Endothelial cell of umbilical vein (primary cell): ENCODE measurements at regions of chr3 and their contacts with region 1.

Region 1: GRCh38 chr3:28328188-28329151 is 20.1 kb upstream of the ZCWPW2 start:
- DNase-seq: peak; percentile 48
- H3K4me3 ChIP-seq: no peak overlapping the region
- H3K27ac ChIP-seq: no peak overlapping the region
- H3K4me1 ChIP-seq: no peaks in the 10 kb centered on the region
- H3K27me3 ChIP-seq: no peaks in the 10 kb centered on the region
- CTCF ChIP-seq: peak; percentile 29 to 40
- POLR2A ChIP-seq: no peak

Region 2: GRCh38 chr3:27712136-27713077 is 616.1 kb before region 1 on chr3:
- CTCF ChIA-PET with region 1: interaction called, 193 read pairs
- POLR2A ChIA-PET with region 1: interaction called, 6 read pairs
- dilution Hi-C with region 1: no loop called
- intact Hi-C with region 1: loop called (anchors 1 kb)
- DNase-seq: peak; percentile 79
- H3K4me3 ChIP-seq: peak overlapping the region; percentile 27 to 50 (median 36)
- H3K27ac ChIP-seq: no peak overlapping the region
- H3K4me1 ChIP-seq: peaks cover 23% of the 10 kb centered on the region
- H3K27me3 ChIP-seq: peaks cover 67 to 76% of the 10 kb centered on the region in 2 experiments
- CTCF ChIP-seq: peak; percentile 68 to 90
- POLR2A ChIP-seq: no peak

Region 3: GRCh38 chr3:27877061-27878013 is 451.1 kb before region 1 on chr3:
- CTCF ChIA-PET with region 1: no interaction called
- POLR2A ChIA-PET with region 1: no interaction called
- dilution Hi-C with region 1: no loop called
- intact Hi-C with region 1: no loop called
- DNase-seq: no peak
- H3K4me3 ChIP-seq: no peak overlapping the region
- H3K27ac ChIP-seq: no peak overlapping the region
- H3K4me1 ChIP-seq: no peaks in the 10 kb centered on the region
- H3K27me3 ChIP-seq: no peaks in the 10 kb centered on the region
- CTCF ChIP-seq: no peak
- POLR2A ChIP-seq: no peak

Region 4: DNA sequence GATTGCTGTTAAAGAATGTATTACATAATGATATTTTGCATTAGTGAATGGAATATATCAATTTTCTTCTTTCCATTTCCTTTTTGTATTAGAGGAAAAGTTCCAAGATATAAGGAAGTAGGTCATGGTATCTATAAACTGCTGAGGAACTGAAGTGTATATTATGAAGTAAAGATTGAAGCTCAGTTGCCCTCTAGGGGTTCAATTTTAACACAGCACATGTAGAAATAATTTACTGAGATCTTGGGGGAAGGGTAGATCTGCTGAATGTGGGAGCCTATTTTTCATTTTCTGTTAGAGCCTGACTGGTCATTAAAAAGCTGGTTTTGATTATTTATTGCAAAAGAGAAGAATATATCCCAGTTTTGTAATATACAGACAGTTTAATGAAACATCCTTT is 41.9 kb before region 1 on chr3:
- CTCF ChIA-PET with region 1: interaction called, 15 read pairs
- POLR2A ChIA-PET with region 1: no interaction called
- dilution Hi-C with region 1: no loop called
- intact Hi-C with region 1: no loop called
- DNase-seq: peak; percentile 54
- H3K4me3 ChIP-seq: no peak overlapping the region
- H3K27ac ChIP-seq: no peak overlapping the region
- H3K4me1 ChIP-seq: no peaks in the 10 kb centered on the region
- H3K27me3 ChIP-seq: no peaks in the 10 kb centered on the region
- CTCF ChIP-seq: peak; percentile 27 to 29
- POLR2A ChIP-seq: no peak

Region 5: DNA sequence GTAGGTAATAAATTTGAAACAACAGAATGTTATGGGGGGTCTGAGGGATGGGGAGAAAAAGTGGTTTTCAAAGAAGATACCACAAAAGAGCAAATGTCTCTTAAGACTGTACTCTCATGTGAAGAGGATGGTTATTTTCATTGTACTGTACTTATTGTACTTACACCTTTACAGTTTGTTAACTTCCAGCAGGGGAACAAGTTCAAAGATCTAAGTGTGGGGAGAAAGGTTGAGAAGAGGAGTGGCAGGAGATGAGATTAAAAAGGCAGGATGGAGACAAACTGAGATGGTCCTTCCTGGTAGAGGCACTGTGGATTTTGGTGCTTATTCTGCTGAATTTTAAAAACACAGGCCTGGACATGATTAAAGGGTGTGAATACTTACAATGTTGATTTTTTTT is 14.7 kb after region 1 on chr3:
- CTCF ChIA-PET with region 1: interaction called, 41 read pairs
- POLR2A ChIA-PET with region 1: no interaction called
- dilution Hi-C with region 1: no loop called
- intact Hi-C with region 1: no loop called
- DNase-seq: no peak
- H3K4me3 ChIP-seq: no peak overlapping the region
- H3K27ac ChIP-seq: no peak overlapping the region
- H3K4me1 ChIP-seq: peaks cover 10% of the 10 kb centered on the region
- H3K27me3 ChIP-seq: no peaks in the 10 kb centered on the region
- CTCF ChIP-seq: no peak
- POLR2A ChIP-seq: no peak